ENCODE measurements at regions of chr19 and their contacts with region 1.

Region 1: GRCh38 chr19:41531438-41532311 is 44.3 kb upstream of the CEACAM21 start:
- DNase-seq: peak; percentile 80
- ATAC-seq: peak; percentile 96

Region 2: DNA sequence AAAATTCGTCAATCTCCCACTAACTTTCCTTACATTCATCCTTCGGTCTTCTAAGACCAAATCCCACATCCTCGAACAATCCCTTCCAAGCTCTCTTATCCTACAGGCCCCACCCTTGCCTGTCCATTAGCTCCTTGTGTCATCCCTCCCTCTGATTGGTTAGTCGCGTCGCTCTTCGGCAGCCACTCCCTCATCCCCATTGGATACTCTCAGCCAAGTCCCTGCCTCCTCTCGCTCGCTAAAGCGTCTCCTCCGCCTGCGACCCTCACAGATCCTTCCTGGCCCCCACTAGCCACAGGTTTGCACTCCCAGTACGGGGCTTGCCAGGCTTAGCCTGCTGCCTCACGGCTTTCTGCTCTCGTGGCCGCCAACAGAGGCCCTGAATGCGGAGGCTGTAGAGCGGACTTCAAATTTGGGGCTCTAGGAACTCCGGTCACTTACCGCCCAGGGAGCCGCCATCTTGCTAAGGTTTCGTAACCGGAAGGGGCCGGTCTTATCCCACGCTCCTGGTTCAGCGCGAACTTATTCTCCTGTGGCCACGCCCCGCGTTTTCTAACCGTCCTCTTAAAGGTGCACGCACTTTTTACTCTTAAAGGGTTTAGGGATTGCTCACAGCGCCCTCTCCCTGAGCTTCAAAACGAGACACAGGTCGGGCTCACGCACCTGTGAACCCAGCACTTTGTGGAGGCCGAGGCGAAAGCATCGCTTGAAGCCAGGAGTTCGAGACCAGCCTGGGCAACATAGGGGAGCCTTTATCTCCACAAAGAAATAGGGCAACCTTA is 92.0 kb before region 1 on chr19 and contains the start of gene DMAC2:
- intact Hi-C with region 1: loop called (anchors 10 kb)
- DNase-seq: peak; percentile 96
- ATAC-seq: peak; percentile 97
- total RNA-seq, gene DMAC2: 111 TPM

Region 3: GRCh38 chr19:41577144-41577830 is 45.6 kb after region 1 on chr19:
- intact Hi-C with region 1: no loop called
- DNase-seq: no peak
- ATAC-seq: no peak

Measured in left ventricle myocardium superior (tissue), 1 donor.